ENCODE measurements at regions of chr7 and their contacts with region 1.

Region 1: DNA sequence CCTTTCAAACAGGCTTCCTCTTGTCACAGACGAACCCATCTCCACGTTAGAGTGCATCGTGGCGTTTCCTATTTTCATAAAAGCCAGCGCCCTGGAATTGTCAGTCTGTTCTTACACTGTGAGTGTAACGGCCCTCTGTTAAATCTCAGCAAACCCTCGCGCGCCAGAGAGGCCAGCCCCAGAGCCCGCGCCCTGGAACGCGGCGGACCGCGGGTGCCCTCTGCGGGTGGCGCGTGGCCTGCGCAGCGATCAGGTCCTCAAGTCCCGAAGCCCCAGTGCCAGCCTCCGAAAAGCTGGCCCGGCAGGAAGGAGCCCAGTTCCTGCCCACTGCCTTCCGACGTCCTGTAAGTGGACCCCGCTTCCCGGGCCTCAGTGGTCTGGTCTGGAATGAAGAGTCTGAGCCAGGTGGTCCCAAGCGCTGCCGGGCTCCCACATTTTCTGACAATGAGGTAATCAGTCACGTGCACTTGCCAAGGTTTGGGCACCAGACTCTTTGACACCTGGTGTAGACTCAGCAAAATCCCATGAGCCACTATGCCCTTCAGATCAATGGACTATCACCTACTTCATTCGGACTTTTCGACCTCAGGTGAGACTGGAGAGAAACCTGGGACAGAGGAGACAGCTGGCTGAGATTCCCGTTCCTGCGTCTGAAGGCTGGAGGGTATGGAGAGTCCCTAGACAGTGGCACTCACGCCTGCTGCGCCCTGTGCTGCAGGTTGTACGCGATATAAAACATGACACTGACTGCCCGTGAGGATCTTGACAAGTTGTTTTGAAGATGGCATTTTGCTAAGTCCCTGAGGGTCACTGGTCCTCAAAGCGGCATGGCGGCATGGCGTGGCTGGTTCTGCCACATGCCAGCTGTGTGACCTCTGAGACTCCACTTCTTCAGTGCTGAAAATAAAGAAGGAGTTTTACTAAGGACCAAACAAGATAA is 109.4 kb upstream of the LANCL2 start:
- DNase-seq: peak; percentile 80

Region 2: GRCh38 chr7:54773472-54774399 is 482.0 kb before region 1 on chr7:
- intact Hi-C with region 1: loop called (anchors 1 kb)
- DNase-seq: peak; percentile 88

Region 3: DNA sequence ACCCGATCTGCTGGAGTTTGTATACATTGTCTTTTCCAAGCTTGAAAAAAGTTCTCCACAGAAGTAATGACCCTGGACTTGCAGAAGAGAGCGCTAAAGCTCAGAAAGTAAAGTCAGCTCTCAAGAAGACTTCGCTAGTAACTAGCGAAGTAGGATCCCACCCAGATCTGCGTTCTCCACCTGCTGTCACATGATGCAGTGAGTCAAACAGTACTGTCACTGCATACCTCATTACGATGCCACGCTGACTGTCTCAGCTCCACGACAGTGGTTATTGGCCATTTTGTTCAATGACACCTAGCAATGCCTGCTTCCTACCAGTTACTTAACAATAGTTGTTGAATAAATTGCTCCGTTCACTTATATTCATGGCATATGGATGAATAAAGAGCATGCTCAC is 467.1 kb before region 1 on chr7:
- intact Hi-C with region 1: loop called (anchors 1 kb)
- DNase-seq: no peak

Region 4: GRCh38 chr7:54839538-54840213 is 416.1 kb before region 1 on chr7:
- intact Hi-C with region 1: loop called (anchors 5 kb)
- DNase-seq: peak; percentile 79

Region 5: DNA sequence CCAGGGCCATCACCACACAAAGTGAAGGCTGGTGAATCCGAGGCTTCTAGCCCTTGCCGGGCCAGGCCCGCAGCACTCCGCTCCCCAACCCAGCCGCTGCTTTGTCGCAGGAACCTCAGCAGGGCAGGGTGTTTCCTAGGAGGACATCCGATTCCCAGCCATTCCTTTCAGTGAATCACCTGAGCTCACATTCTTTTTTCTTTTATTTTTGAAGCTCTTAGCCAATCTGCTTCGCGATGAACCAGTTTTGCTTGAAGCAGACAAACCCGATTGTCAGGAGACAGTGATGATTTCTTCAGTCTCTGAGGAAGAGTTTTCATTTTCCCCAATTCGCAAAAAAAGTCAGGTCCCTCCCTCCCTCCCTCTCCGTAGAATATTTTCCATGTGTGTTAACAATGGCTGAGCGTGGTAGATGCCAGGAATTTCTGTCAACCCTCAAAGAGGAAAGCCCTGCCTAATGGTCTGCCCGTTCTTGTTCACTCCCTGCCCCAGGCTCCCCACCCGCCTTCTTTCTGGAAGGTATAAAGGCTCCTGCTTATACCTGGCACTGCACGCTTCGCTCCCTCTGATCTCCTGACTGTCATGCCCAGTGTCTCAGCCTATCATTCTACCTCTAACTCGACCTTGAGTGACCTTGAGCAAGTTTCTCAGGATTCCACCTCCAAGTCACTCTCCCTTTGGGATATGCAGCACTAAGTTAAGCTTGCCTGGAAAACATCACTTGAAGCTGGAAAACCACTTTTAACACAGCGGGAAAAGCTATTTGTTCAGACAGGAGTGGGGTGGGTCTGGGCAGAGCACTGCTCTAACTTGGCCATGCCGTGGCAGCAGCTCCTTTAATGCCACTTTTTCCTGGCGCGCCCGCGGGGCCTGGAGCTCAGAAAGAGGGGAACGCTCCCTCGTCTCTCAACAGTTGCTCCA is 201.9 kb before region 1 on chr7:
- intact Hi-C with region 1: loop called (anchors 10 kb)
- DNase-seq: no peak

Region 6: GRCh38 chr7:55132890-55133551 is 122.7 kb before region 1 on chr7:
- intact Hi-C with region 1: loop called (anchors 10 kb)
- DNase-seq: no peak

Region 7: DNA sequence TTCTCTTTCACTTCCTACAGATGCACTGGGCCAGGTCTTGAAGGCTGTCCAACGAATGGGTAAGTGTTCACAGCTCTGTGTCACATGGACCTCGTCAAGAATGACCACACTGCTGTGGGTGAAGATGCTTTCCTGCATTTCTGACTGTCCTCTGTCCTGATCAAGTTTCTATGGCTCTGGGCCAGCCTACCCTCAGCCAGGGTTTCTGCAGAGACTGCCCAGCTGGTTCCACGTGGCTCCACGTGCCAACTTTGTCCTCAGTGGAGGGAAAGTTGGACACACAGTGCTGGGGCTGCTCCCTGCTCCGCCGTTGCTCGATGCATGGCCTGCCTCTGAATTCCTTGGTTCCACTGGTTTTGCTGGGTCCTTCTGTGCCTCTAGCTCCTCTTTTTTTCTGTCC is 84.6 kb before region 1 on chr7:
- intact Hi-C with region 1: no loop called
- DNase-seq: no peak